Activated naive CD4-positive, alpha-beta T cell treated with anti-CD3 and anti-CD28 coated beads for 36 hours (primary cell): ENCODE measurements at regions of chr7 and their contacts with region 1.

Region 1: DNA sequence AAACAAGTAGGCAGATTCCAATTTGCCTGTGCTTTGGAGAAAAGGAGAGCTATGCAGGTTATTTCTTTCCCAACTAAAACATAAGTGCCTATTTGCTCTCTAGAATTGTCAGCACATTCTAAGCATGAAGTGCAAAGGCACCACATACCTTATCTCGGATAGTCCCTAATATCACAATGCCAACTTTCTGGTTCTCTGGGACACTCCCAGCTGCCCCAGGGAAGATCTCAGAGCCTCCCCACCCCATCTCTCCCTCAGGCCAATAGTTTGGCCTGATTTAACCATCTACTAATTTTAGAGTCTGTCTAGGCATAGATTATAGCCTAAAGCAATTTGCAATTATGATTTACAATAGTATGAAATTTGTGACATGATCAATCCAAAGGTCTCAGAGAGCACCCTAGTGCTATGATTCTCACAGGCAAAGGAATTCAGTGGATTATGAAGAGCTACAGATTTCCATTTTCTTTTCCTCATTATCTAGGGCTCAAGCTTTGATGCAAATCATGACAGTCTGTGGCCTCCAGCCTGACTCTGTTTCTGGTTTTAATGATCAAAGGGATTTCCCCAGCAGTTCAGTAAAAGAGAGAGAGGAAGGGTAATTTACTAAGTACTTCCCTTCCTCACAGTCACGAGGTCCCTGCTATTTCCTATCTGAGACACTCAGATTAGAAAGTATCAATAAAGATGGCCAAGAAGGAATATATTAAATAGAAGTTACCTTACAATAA is 29.0 kb upstream of the IL6 start:
- DNase-seq: peak; percentile 59
- H3K4me3 Mint-ChIP-seq: no peak overlapping the region
- H3K27ac Mint-ChIP-seq: peak overlapping the region; percentile 84
- H3K4me1 Mint-ChIP-seq: peaks cover 67% of the 10 kb centered on the region
- H3K27me3 Mint-ChIP-seq: no peaks in the 10 kb centered on the region

Region 2: GRCh38 chr7:22549667-22550513 is 148.2 kb before region 1 on chr7:
- CTCF ChIA-PET with region 1: no interaction called
- intact Hi-C with region 1: no loop called
- DNase-seq: peak; percentile 60
- H3K4me3 Mint-ChIP-seq: peak overlapping the region; percentile 55
- H3K27ac Mint-ChIP-seq: no peak overlapping the region
- H3K4me1 Mint-ChIP-seq: peaks cover 10% of the 10 kb centered on the region
- H3K27me3 Mint-ChIP-seq: peaks cover 58% of the 10 kb centered on the region

Region 3: DNA sequence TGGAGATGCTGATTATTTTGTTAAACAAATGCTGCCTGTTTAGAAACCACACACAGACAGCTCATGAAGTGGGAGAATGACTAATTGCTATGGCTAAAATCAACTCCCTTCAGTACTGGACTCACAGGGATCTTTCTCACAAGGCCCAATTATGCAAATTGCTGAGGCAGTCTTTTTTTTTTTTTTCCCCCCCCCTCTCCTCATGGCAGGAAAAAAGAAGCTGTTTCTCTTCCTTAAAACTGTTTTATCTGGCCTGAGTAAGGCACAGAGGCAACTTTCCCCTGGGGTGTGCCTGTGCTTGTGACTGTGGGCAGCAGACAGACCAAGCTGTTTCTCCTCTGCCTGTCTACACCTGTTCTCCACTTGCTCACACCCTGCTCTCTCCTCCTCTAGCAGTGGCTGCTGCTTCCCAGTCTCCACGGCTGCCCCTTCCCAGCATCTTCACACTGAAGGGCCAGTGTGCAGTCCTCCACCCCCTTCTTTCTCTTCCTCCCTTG is 132.7 kb before region 1 on chr7:
- CTCF ChIA-PET with region 1: interaction called, 9 read pairs
- intact Hi-C with region 1: loop called (anchors 1 kb)
- DNase-seq: no peak
- H3K4me3 Mint-ChIP-seq: no peak overlapping the region
- H3K27ac Mint-ChIP-seq: no peak overlapping the region
- H3K4me1 Mint-ChIP-seq: peaks cover 45% of the 10 kb centered on the region
- H3K27me3 Mint-ChIP-seq: peaks cover 29% of the 10 kb centered on the region

Region 4: DNA sequence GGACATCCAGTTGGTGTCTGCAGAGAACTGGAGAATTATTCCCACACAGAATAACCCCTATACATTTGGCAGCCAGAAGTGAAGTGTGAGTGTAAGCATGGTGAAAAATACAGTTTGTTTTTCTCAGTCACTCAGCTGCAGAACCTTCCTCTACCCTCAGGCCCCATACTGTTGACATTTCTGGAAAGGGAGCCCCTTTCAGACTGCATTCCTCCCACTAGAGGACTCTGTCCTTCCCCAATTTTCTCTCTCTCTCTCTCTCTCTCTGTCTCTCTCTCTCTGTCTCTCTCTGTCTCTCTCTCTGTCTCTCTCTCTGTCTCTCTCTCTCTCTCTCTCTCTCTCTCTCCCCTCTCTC is 111.3 kb before region 1 on chr7:
- CTCF ChIA-PET with region 1: interaction called, 3 read pairs
- intact Hi-C with region 1: loop called (anchors 1 kb)
- DNase-seq: no peak
- H3K4me3 Mint-ChIP-seq: no peak overlapping the region
- H3K27ac Mint-ChIP-seq: no peak overlapping the region
- H3K4me1 Mint-ChIP-seq: peaks cover 19% of the 10 kb centered on the region
- H3K27me3 Mint-ChIP-seq: peaks cover 21% of the 10 kb centered on the region

Region 5: GRCh38 chr7:22640269-22640668 is 57.8 kb before region 1 on chr7:
- CTCF ChIA-PET with region 1: no interaction called
- intact Hi-C with region 1: loop called (anchors 1 kb)
- DNase-seq: peak; percentile 75
- H3K4me3 Mint-ChIP-seq: no peak overlapping the region
- H3K27ac Mint-ChIP-seq: peak overlapping the region; percentile 41
- H3K4me1 Mint-ChIP-seq: peaks cover 23% of the 10 kb centered on the region
- H3K27me3 Mint-ChIP-seq: peaks cover 8% of the 10 kb centered on the region

Region 6: GRCh38 chr7:22672846-22673652 is 25.0 kb before region 1 on chr7:
- CTCF ChIA-PET with region 1: interaction called, 5 read pairs
- intact Hi-C with region 1: loop called (anchors 1 kb)
- DNase-seq: no peak
- H3K4me3 Mint-ChIP-seq: no peak overlapping the region
- H3K27ac Mint-ChIP-seq: no peak overlapping the region
- H3K4me1 Mint-ChIP-seq: peaks cover 64% of the 10 kb centered on the region
- H3K27me3 Mint-ChIP-seq: no peaks in the 10 kb centered on the region

Region 7: DNA sequence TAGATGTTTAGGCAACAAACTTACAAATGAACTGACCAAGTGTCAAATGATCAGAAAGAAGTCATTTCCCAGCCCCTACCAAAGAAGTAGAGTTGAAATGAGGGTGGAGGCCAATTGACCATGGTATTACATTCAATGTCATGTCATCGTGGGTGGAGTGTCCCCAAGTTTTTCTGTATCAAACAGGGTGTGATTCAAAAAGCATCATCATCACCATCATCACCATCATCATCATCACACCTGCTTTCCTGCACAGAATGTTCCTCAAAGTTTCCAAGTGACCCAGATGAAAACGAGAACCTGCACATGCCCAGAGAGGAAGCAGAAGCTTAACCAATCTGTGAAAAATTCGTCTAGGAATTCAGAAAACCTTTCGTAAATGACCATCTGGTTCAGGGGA is 13.3 kb before region 1 on chr7:
- CTCF ChIA-PET with region 1: interaction called, 3 read pairs
- intact Hi-C with region 1: loop called (anchors 1 kb)
- DNase-seq: no peak
- H3K4me3 Mint-ChIP-seq: no peak overlapping the region
- H3K27ac Mint-ChIP-seq: no peak overlapping the region
- H3K4me1 Mint-ChIP-seq: peaks cover 24% of the 10 kb centered on the region
- H3K27me3 Mint-ChIP-seq: no peaks in the 10 kb centered on the region

Region 8: GRCh38 chr7:22765609-22766008 is 67.6 kb after region 1 on chr7:
- CTCF ChIA-PET with region 1: no interaction called
- intact Hi-C with region 1: no loop called
- DNase-seq: no peak
- H3K4me3 Mint-ChIP-seq: no peak overlapping the region
- H3K27ac Mint-ChIP-seq: no peak overlapping the region
- H3K4me1 Mint-ChIP-seq: no peaks in the 10 kb centered on the region
- H3K27me3 Mint-ChIP-seq: peaks cover 22% of the 10 kb centered on the region